CD4-positive, alpha-beta memory T cell (primary cell): ENCODE measurements at regions of chr5 and their contacts with region 1.

Region 1: DNA sequence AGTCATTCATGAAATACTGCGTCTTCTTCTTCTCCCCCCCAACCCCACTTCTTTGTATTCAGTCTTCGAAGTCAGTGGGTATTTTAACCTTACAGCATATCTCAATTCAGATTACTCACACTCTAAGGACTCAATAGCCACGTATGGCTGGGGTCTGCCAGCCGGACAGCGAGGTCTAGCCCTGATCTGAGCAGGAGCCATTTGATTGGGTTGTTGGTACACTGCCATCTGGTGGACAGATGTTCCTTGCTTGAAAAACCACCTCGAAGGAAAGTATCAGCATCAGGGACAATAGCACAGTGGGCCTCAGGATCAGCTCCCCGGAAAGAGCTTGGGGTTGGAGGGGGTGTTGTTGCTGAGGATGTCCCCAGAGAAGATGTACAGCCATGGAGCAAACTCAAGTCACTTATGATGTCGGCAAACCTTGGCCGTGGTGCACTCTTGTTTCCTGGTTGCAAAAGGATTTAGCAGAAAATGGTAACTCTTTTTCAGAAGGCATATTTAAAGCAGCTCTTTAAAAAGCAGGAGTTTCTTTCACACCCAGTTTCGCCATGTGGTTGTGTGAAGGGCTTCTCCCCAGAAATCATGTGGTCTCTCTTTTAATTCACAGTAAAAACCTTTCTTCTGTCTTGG is 31.7 kb upstream of the KCNMB1 start:
- DNase-seq: peak; percentile 45 to 54 (median 53)
- H3K4me3 ChIP-seq: no peak overlapping the region
- H3K4me3 Mint-ChIP-seq: no peak overlapping the region
- H3K27ac ChIP-seq: no peak overlapping the region
- H3K27ac Mint-ChIP-seq: peak overlapping the region in 1 of 7 donors; percentile 24
- H3K4me1 ChIP-seq: peaks cover 19% of the 10 kb centered on the region
- H3K4me1 Mint-ChIP-seq: peaks cover 18 to 25% (median 23%) of the 10 kb centered on the region in 4 donors
- H3K27me3 ChIP-seq: no peaks in the 10 kb centered on the region
- H3K27me3 Mint-ChIP-seq: peaks cover 4 to 7% of the 10 kb centered on the region in 2 donors

Region 2: GRCh38 chr5:170408226-170408625 is 12.7 kb before region 1 on chr5:
- CTCF ChIA-PET with region 1: interaction called, 11 read pairs
- POLR2A ChIA-PET with region 1: interaction called, 3 read pairs
- intact Hi-C with region 1: no loop called
- DNase-seq: no peak
- H3K4me3 ChIP-seq: no peak overlapping the region
- H3K4me3 Mint-ChIP-seq: no peak overlapping the region
- H3K27ac ChIP-seq: no peak overlapping the region
- H3K27ac Mint-ChIP-seq: no peak overlapping the region
- H3K4me1 ChIP-seq: no peaks in the 10 kb centered on the region
- H3K4me1 Mint-ChIP-seq: peaks cover 0 to 4% (median 2%) of the 10 kb centered on the region in 4 donors
- H3K27me3 ChIP-seq: no peaks in the 10 kb centered on the region
- H3K27me3 Mint-ChIP-seq: peaks cover 0 to 3% of the 10 kb centered on the region in 2 donors

Region 3: DNA sequence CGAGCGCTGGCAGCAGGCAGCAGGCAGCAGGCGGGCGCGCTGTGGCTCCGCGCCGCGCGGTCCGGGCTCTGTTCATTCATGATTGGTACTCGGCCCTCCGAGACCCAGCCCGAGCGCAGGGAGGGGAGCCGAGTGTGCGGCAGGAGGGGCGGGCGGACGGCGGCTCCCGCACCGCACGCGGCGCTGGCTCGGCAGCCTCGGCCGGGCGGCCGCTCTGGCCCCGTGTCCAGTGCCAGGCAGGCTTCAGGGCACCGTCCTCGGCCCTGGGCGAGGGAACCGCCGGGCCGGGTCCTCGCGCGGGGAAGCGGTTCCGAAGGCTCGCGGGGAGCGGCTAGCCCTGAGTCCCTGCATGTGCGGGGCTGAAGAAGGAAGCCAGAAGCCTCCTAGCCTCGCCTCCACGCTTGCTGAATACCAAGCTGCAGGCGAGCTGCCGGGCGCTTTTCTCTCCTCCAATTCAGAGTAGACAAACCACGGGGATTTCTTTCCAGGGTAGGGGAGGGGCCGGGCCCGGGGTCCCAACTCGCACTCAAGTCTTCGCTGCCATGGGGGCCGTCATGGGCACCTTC is 83.2 kb after region 1 on chr5:
- CTCF ChIA-PET with region 1: no interaction called
- POLR2A ChIA-PET with region 1: no interaction called
- intact Hi-C with region 1: no loop called
- DNase-seq: no peak
- H3K4me3 ChIP-seq: no peak overlapping the region
- H3K4me3 Mint-ChIP-seq: no peak overlapping the region
- H3K27ac ChIP-seq: no peak overlapping the region
- H3K27ac Mint-ChIP-seq: no peak overlapping the region
- H3K4me1 ChIP-seq: no peaks in the 10 kb centered on the region
- H3K4me1 Mint-ChIP-seq: peaks cover 0 to 3% (median 1%) of the 10 kb centered on the region in 4 donors
- H3K27me3 ChIP-seq: peaks cover 11% of the 10 kb centered on the region
- H3K27me3 Mint-ChIP-seq: peaks cover 39 to 45% of the 10 kb centered on the region in 2 donors